ENCODE measurements at regions of chr17 and their contacts with region 1.

Region 1: GRCh38 chr17:62995377-62995885 is 29.4 kb downstream of the TANC2 start:
- H3K4me3 ChIP-seq: no peak overlapping the region
- H3K27ac ChIP-seq: no peak overlapping the region
- H3K4me1 ChIP-seq: peaks cover 6% of the 10 kb centered on the region; the same call in 1 of the 2 replicates
- CTCF ChIP-seq: 0 out of 2 replicates have a peak, but pooled peaks have one; percentile 46

Region 2: DNA sequence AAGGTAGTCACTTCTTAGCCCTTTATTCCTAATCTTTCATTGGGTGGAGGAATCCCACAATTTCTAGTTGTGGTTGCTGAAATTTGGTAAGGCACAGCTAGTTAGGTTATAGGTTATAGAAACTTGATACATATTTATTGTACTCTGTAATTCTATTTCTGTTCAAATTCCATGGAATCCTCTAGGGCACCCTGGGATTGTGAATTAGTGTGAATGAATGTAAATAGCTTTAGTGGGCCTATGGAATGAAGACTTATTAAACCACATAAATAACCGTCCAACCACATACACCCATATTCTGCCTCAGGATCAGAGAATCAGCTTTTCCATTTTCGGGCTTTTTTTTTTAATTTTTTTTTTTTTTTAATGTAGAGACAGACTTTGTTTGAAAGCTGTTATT is 20.2 kb before region 1 on chr17:
- CTCF ChIA-PET with region 1: interaction called, 10 read pairs
- POLR2A ChIA-PET with region 1: no interaction called
- H3K4me3 ChIP-seq: no peak overlapping the region
- H3K27ac ChIP-seq: no peak overlapping the region
- H3K4me1 ChIP-seq: no peaks in the 10 kb centered on the region
- CTCF ChIP-seq: no peak

Region 3: GRCh38 chr17:63032142-63032541 is 36.7 kb after region 1 on chr17:
- CTCF ChIA-PET with region 1: interaction called, 12 read pairs
- POLR2A ChIA-PET with region 1: no interaction called
- H3K4me3 ChIP-seq: no peak overlapping the region
- H3K27ac ChIP-seq: no peak overlapping the region
- H3K4me1 ChIP-seq: peaks cover 8% of the 10 kb centered on the region; the same call in 1 of the 2 replicates
- CTCF ChIP-seq: no peak